Caco-2 (cell line): ENCODE measurements at regions of chr17 and their contacts with region 1.

Region 1: DNA sequence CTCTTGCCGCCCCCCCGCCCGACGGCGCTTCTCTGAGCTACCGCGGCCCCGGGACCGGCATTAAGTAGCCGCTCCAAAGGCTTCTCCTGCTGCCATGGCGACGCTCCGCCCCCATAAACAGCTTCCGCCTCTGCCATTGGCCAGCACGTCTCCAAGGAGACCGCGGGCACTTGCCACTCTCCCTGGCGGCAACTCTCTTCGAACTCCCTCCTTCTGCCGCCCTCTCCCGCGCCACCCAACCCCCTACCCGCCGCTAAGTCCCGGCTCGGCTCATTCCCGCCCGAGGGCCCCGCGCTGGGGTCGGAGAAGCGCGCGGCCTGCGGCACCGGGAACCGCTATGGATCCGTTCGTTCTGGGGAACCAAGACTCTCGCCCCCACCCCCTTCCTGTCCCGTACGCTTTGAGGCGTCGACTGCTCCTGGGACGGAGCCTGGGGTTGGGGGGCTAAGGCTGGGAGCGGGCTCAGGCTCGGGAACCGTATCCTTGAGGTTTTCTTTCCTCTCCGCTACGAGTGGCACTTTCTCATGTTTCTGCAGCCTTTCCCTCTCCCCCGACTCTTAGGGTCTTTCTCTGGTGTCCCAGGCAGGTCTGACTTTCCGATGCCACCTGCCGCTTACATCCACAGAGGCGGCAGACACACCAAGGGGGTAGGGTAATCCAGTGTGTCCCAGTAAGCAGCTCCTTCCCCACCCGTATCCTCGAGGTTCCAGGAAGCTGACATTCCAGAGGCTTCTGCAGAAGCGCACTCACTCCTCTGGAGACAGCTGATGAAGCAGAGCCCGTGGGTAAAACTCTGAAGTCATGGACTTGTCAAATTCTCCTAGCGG is at the start of gene FOXJ1:
- DNase-seq: peak; percentile 95 to 97
- H3K4me3 ChIP-seq: peak within 1 kb of the TSS; percentile 70
- H3K4me3 Mint-ChIP-seq: peak within 1 kb of the TSS; percentile 82
- H3K27ac Mint-ChIP-seq: peak within 1 kb of the TSS; percentile 63
- H3K4me1 ChIP-seq: peaks cover 59% of the 10 kb centered on the region
- H3K4me1 Mint-ChIP-seq: peaks cover 40% of the 10 kb centered on the region
- H3K27me3 ChIP-seq: no peaks in the 10 kb centered on the region
- H3K27me3 Mint-ChIP-seq: no peaks in the 10 kb centered on the region
- CTCF ChIP-seq: no peak
- total RNA-seq, gene FOXJ1: 7.0 and 10.7 TPM in 2 replicates

Region 2: DNA sequence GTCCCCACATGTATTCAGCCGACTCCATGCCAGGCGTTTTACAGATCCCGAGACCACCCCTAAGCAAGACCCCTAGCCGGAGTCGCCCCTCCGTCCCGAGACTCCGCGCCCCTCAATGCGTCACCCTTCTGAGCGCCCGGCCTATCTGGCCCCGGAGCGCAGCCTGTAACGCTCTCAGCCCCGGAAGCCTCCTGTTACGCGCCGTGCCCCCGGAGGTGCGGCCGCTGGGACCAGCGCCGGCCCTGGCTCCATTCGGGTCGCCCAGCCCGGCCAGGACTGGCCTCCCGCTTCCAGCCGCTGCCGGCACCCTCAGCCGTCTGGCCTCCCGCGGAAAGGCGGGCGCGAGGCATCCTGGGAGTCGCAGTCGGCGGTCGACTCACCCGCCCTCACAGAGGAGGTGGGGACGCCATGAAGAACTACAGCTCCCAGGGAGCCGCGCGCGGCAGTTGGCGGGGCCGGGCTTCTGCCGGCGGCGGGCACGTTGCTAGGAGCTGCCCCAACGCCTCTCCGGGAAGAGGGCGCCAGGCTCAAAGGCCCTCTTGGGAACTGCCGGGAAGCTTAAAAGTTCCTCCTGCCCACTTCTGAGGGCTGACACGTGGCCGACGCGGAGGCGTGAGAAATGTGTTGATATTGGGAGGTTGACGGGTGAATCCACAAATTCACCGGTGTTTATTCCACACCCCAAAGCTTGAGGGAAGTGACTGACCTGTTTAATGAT is 200.5 kb before region 1 on chr17 and contains the start of gene FBF1:
- CTCF ChIA-PET with region 1: no interaction called
- POLR2A ChIA-PET with region 1: interaction called, 11 read pairs
- intact Hi-C with region 1: no loop called
- DNase-seq: peak; percentile 97 to 98
- H3K4me3 ChIP-seq: peak within 1 kb of the TSS; percentile 65
- H3K4me3 Mint-ChIP-seq: peak within 1 kb of the TSS; percentile 79
- H3K27ac Mint-ChIP-seq: peak within 1 kb of the TSS; percentile 79
- H3K4me1 ChIP-seq: no peaks in the 10 kb centered on the region
- H3K4me1 Mint-ChIP-seq: no peaks in the 10 kb centered on the region
- H3K27me3 ChIP-seq: no peaks in the 10 kb centered on the region
- H3K27me3 Mint-ChIP-seq: no peaks in the 10 kb centered on the region
- CTCF ChIP-seq: no peak
- total RNA-seq, gene FBF1: 13.9 and 14.1 TPM in 2 replicates

Region 3: GRCh38 chr17:76072148-76072858 is 69.1 kb before region 1 on chr17 and contains the start of gene SRP68:
- CTCF ChIA-PET with region 1: no interaction called
- POLR2A ChIA-PET with region 1: interaction called, 8 read pairs
- intact Hi-C with region 1: loop called (anchors 1 kb)
- DNase-seq: peak; percentile 96 to 97
- H3K4me3 ChIP-seq: peak within 1 kb of the TSS; percentile 83
- H3K4me3 Mint-ChIP-seq: peak within 1 kb of the TSS; percentile 97
- H3K27ac Mint-ChIP-seq: peak within 1 kb of the TSS; percentile 91
- H3K4me1 ChIP-seq: 0 out of 2 replicates have a peak, but pooled peaks cover 5% of the 10 kb centered on the region
- H3K4me1 Mint-ChIP-seq: peaks cover 9% of the 10 kb centered on the region
- H3K27me3 ChIP-seq: no peaks in the 10 kb centered on the region; the same call in none of the 2 replicates
- H3K27me3 Mint-ChIP-seq: peaks cover 12% of the 10 kb centered on the region
- CTCF ChIP-seq: no peak
- total RNA-seq, gene SRP68: 105 and 113 TPM in 2 replicates

Region 4: DNA sequence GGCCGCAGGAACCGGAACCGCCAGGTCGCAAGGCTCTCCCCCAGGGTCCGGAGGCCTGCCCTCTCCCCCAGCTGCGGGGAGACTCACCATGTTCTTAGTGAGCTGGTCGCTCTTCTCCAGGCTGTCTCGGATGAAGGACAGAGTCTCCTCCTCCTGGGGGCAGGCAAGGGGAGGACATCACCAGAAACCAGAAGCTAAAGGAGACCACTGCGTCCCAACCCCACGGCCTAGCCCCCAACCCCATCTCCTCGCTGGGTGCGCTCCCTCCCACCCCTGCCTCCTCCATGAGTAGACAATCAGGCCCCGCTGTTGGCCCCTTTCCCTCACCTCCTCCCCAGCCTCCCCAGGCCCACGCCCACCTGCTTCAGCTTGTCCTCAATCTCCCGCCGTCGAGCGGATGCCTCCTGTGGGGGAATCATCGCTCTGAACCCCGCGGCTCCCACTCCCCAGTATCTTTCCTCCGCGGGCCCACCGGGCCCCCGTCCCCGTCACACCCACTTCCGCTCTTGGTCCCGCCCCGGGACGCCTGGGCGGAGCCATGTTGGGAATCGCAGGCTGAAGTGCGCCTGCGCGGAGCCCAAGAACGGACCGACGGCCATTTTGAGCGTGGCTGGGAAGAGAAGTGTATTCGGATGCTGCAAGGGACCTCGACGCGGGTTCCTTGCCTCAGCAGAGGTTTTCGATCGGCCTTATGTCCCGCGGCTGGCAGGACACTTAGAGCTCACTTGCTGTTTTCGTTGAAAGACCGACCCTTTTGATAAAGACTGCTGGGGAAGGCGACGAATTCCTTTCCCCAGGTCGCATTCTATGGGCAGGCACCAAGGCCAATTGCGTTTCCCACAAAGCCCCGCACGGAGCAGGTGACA is 37.9 kb before region 1 on chr17 and contains the start of gene EXOC7:
- CTCF ChIA-PET with region 1: interaction called, 15 read pairs
- POLR2A ChIA-PET with region 1: interaction called, 21 read pairs
- intact Hi-C with region 1: loop called (anchors 2 kb)
- DNase-seq: peak; percentile 92 to 96
- H3K4me3 ChIP-seq: peak within 1 kb of the TSS; percentile 82
- H3K4me3 Mint-ChIP-seq: peak within 1 kb of the TSS; percentile 92
- H3K27ac Mint-ChIP-seq: peak within 1 kb of the TSS; percentile 91
- H3K4me1 ChIP-seq: peaks cover 28% of the 10 kb centered on the region
- H3K4me1 Mint-ChIP-seq: peaks cover 9% of the 10 kb centered on the region
- H3K27me3 ChIP-seq: no peaks in the 10 kb centered on the region
- H3K27me3 Mint-ChIP-seq: no peaks in the 10 kb centered on the region
- CTCF ChIP-seq: no peak
- total RNA-seq, gene EXOC7: 205 TPM in 2 replicates

Region 5: GRCh38 chr17:76353599-76354316 is 212.3 kb after region 1 on chr17 and contains the start of gene PRPSAP1:
- CTCF ChIA-PET with region 1: interaction called, 4 read pairs
- POLR2A ChIA-PET with region 1: interaction called, 10 read pairs
- intact Hi-C with region 1: no loop called
- DNase-seq: peak; percentile 89 to 91
- H3K4me3 ChIP-seq: peak within 1 kb of the TSS; percentile 83
- H3K4me3 Mint-ChIP-seq: peak within 1 kb of the TSS; percentile 94
- H3K27ac Mint-ChIP-seq: peak within 1 kb of the TSS; percentile 97
- H3K4me1 ChIP-seq: peaks cover 15% of the 10 kb centered on the region
- H3K4me1 Mint-ChIP-seq: peaks cover 10% of the 10 kb centered on the region
- H3K27me3 ChIP-seq: no peaks in the 10 kb centered on the region
- H3K27me3 Mint-ChIP-seq: no peaks in the 10 kb centered on the region
- CTCF ChIP-seq: peak; percentile 49 to 59
- total RNA-seq, gene PRPSAP1: 81.3 and 87.6 TPM in 2 replicates